Dendritic cell treated with granulocyte-macrophage colony-stimulating factor and Interleukin-4, amounts not matched to agents 40 ng/mL and 50 ng/mL, for 4 days (primary cell): ENCODE measurements at regions of chr4 and their contacts with region 1.

Region 1: GRCh38 chr4:120049732-120050494 is 16.7 kb downstream of the MAD2L1 start:
- H3K4me3 Mint-ChIP-seq: peak overlapping the region; percentile 51
- H3K27ac Mint-ChIP-seq: no peak overlapping the region
- H3K4me1 Mint-ChIP-seq: peaks cover 11% of the 10 kb centered on the region
- H3K27me3 Mint-ChIP-seq: no peaks in the 10 kb centered on the region

Region 2: GRCh38 chr4:119314356-119314755 is 735.6 kb before region 1 on chr4:
- intact Hi-C with region 1: loop called (anchors 5 kb)
- H3K4me3 Mint-ChIP-seq: no peak overlapping the region
- H3K27ac Mint-ChIP-seq: no peak overlapping the region
- H3K4me1 Mint-ChIP-seq: peaks cover 5% of the 10 kb centered on the region
- H3K27me3 Mint-ChIP-seq: no peaks in the 10 kb centered on the region

Region 3: DNA sequence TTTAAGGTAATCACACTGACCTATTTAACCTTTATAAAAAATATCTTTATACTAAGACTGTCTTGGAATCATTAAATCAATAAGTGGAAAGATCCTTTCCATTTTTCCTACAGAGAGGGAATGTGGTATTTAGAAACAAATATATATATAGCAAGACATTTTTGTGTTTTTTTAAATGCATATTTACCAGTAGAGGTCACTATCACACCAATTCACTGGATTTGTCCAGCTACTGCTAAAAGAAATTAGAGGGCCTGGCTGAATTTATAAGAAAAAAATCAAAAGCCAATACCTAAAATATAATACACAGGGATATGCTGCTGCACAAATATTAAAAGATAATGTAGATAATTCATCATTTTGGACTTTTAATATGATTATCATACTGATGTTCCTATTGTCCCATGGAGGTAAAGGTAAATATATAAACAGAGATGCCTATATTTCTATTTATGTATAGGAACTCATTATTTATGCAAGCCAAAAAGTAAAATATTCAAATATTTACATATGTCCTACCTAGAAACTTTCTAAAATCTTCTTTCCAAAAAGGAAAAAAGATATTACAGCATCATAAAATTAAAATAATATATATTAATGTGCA is 490.8 kb before region 1 on chr4:
- intact Hi-C with region 1: loop called (anchors 5 kb)
- H3K4me3 Mint-ChIP-seq: no peak overlapping the region
- H3K27ac Mint-ChIP-seq: no peak overlapping the region
- H3K4me1 Mint-ChIP-seq: no peaks in the 10 kb centered on the region
- H3K27me3 Mint-ChIP-seq: no peaks in the 10 kb centered on the region

Region 4: GRCh38 chr4:119628308-119629141 is 421.4 kb before region 1 on chr4 and contains the start of gene PDE5A:
- intact Hi-C with region 1: loop called (anchors 1 kb)
- H3K4me3 Mint-ChIP-seq: peak within 1 kb of the TSS; percentile 89
- H3K27ac Mint-ChIP-seq: no peak within 1 kb of the TSS
- H3K4me1 Mint-ChIP-seq: peaks cover 25% of the 10 kb centered on the region
- H3K27me3 Mint-ChIP-seq: peaks cover 61% of the 10 kb centered on the region